Thyroid gland (tissue), 4 donors: ENCODE measurements at regions of chr3 and their contacts with region 1.

Region 1: GRCh38 chr3:43503067-43503728 is 118.6 kb downstream of the ANO10 start:
- DNase-seq: no peak
- H3K4me3 ChIP-seq: no peak overlapping the region
- H3K27ac ChIP-seq: peak overlapping the region in 1 of 3 donors; percentile 2
- H3K4me1 ChIP-seq: peaks cover 3 to 14% of the 10 kb centered on the region in 2 donors
- H3K27me3 ChIP-seq: no peaks in the 10 kb centered on the region
- CTCF ChIP-seq: peak; percentile 16 to 74 (median 52)
- POLR2A ChIP-seq: no peak

Region 2: DNA sequence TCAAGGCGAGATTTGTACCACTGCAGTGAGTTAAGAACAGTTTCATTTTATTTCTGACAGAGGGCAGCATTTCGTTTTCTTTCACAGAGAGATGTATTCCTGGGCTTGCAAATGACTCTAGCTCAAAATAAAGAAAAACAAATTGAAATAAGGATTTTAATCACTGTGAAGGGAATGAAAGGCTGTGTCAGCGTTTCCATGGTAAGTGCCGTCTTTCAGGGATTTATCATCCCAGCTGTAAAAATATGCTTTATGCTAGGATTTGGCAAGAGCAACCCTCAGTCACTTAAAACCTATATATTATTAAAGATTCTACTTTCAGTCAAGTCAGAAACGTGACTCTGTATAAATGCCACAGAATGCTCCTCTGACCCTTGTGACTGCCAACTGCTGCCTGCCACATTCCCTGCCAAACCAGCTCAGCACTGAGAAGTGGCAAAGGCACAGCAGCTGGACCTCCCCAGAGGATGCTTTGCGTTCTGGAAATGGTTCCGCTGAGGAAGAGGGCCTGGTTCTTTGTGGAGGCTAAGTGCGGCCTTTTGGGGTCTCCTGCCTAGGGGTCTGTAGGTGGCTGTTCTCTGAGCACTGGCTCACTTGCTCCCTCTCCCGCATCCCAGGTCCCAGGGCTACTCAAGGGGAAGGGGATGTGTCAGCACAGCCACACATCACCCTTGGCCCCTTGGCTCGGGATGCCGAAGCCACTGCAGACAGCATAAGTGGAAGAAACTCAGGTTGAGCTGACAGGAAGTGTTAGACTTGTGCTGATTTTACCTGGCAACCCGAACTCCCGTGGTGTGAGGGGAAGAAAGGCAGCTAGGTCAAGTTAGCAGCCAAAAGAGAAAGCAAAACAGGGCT is 340.7 kb before region 1 on chr3:
- intact Hi-C with region 1: loop called (anchors 5 kb)
- DNase-seq: no peak
- H3K4me3 ChIP-seq: no peak overlapping the region
- H3K27ac ChIP-seq: peak overlapping the region in 1 of 3 donors; percentile 15
- H3K4me1 ChIP-seq: no peaks in the 10 kb centered on the region
- H3K27me3 ChIP-seq: no peaks in the 10 kb centered on the region
- CTCF ChIP-seq: peak in 3 of 6 experiments; percentile 47 to 54 (median 51)
- POLR2A ChIP-seq: no peak

Region 3: DNA sequence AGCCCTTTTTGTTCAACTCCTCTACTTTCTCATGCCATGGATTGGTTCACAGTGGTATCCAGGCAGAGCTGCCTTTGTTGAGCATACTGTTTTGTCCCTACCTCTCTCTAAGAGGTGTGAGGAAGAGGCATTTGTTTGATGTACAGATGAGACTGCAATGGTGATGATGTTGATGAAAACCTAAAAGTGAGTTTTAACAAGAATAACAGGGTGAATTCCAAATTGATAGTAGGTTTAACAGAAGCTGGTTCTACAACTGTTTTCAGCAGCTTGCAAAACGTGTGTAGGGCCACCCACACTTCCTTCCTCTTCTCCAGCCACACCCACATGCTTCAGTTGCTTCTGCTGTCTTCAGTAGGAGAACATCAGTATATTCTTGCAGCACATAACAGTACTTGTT is 206.6 kb before region 1 on chr3:
- intact Hi-C with region 1: loop called (anchors 10 kb)
- DNase-seq: no peak
- H3K4me3 ChIP-seq: no peak overlapping the region
- H3K27ac ChIP-seq: no peak overlapping the region
- H3K4me1 ChIP-seq: peaks cover 24 to 71% of the 10 kb centered on the region in 2 donors
- H3K27me3 ChIP-seq: no peaks in the 10 kb centered on the region
- CTCF ChIP-seq: no peak
- POLR2A ChIP-seq: no peak

Region 4: DNA sequence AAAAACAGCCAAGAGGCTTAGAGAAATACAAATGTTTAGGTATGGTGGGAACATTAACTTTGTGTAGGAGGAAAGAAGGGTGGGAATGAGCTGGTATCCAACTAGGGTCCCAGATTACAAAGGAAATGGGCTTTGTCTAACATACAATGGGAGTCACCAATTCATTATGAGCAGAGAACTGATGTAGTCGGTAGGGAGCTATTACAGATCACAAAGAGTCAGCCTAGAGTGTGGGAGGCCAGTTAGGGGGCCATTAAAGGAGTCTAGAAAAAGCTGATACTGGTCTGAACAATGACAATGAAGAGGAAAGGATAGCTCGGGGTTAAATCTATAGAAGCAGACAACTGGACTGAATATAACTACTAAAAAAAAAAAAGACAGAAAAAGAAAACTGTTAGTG is 103.1 kb after region 1 on chr3:
- intact Hi-C with region 1: no loop called
- DNase-seq: no peak
- H3K4me3 ChIP-seq: no peak overlapping the region
- H3K27ac ChIP-seq: no peak overlapping the region
- H3K4me1 ChIP-seq: no peaks in the 10 kb centered on the region
- H3K27me3 ChIP-seq: no peaks in the 10 kb centered on the region
- CTCF ChIP-seq: no peak
- POLR2A ChIP-seq: no peak